Activated naive CD4-positive, alpha-beta T cell treated with anti-CD3 and anti-CD28 coated beads for 36 hours (primary cell): ENCODE measurements at regions of chr1 and their contacts with region 1.

Region 1: GRCh38 chr1:89670163-89670562 is 37.2 kb downstream of the LRRC8C start:
- DNase-seq: no peak
- H3K4me3 Mint-ChIP-seq: peak overlapping the region; percentile 16
- H3K27ac Mint-ChIP-seq: peak overlapping the region; percentile 43
- H3K4me1 Mint-ChIP-seq: peaks cover 83% of the 10 kb centered on the region
- H3K27me3 Mint-ChIP-seq: no peaks in the 10 kb centered on the region

Region 2: DNA sequence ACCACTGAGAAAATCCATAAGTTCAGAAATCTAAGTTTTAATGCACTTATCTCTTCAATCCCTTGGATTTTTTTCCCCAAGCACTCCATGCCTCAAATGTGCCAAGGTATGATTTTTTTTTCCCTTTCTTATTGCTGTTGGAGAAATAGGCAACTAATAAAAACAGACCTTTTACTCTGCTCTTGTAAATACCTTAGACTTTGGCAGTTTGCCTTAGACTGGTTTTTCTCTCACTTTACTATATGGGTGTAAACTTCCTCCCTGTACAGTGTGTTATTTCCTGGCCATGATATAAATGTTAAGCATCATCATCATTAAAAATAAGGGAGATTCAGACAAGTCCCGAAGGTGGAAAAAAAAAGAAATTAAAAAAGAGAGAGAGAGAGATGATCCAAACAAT is 28.5 kb after region 1 on chr1:
- CTCF ChIA-PET with region 1: interaction called, 6 read pairs
- intact Hi-C with region 1: loop called (anchors 1 kb)
- DNase-seq: no peak
- H3K4me3 Mint-ChIP-seq: no peak overlapping the region
- H3K27ac Mint-ChIP-seq: peak overlapping the region; percentile 88
- H3K4me1 Mint-ChIP-seq: peaks cover 83% of the 10 kb centered on the region
- H3K27me3 Mint-ChIP-seq: no peaks in the 10 kb centered on the region